Activated CD8-positive, alpha-beta T cell treated with anti-CD3 and anti-CD28 coated beads, Interleukin-2, amount 10 ng/mL, durations not matched to agents 7 days and 5 days (primary cell): ENCODE measurements at regions of chr19 and their contacts with region 1.

Region 1: GRCh38 chr19:6218491-6219162 is 61.1 kb downstream of the MLLT1 start:
- DNase-seq: peak; percentile 90
- ATAC-seq: peak; percentile 80
- H3K4me3 Mint-ChIP-seq: no peak overlapping the region
- H3K27ac Mint-ChIP-seq: peak overlapping the region; percentile 67
- H3K4me1 Mint-ChIP-seq: no peaks in the 10 kb centered on the region
- H3K27me3 Mint-ChIP-seq: no peaks in the 10 kb centered on the region

Region 2: DNA sequence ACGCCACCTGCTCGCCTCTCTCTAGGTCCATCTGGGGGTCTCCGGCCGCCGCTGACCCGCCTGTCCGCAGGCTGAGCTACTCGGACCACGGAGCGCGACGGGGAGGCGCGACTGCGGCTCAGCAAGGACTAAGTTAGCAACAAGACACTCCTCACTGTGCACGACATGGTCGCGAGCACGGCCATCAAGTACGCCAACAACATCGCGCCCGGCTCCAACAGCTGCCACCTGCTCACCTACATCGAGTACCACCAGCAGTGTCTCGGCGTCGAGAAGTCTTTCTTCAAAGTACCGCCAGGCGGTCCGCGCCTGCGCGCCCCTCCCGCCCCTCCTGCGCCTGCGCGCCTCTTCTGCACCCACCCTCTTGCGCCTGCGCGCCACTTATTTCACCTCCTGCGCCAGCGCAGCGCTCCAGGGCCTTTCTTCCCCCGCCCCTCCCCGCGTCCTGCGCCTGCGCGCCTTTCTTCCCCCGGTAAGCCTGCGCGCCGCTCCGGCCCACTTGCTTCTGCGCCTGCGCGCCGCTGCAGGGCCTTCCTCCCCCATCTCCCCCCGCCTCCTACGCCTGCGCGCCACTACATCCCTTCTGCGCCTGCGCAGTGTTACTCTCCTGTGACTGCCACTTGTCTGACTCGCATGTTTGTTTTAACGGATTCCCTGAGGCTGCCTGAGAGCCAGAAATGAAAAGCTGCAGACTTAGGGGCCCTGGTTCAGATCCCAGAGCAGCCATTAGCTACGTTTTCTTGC is 19.2 kb before region 1 on chr19:
- CTCF ChIA-PET with region 1: interaction called, 11 read pairs
- POLR2A ChIA-PET with region 1: interaction called, 3 read pairs
- DNase-seq: peak; percentile 100
- ATAC-seq: peak; percentile 95
- H3K4me3 Mint-ChIP-seq: peak overlapping the region; percentile 97
- H3K27ac Mint-ChIP-seq: peak overlapping the region; percentile 91
- H3K4me1 Mint-ChIP-seq: peaks cover 17% of the 10 kb centered on the region
- H3K27me3 Mint-ChIP-seq: no peaks in the 10 kb centered on the region

Region 3: GRCh38 chr19:6297202-6297601 is 78.6 kb after region 1 on chr19:
- CTCF ChIA-PET with region 1: interaction called, 17 read pairs
- POLR2A ChIA-PET with region 1: no interaction called
- DNase-seq: no peak
- ATAC-seq: no peak
- H3K4me3 Mint-ChIP-seq: no peak overlapping the region
- H3K27ac Mint-ChIP-seq: no peak overlapping the region
- H3K4me1 Mint-ChIP-seq: peaks cover 2% of the 10 kb centered on the region
- H3K27me3 Mint-ChIP-seq: no peaks in the 10 kb centered on the region

Region 4: GRCh38 chr19:6312018-6312417 is 93.4 kb after region 1 on chr19:
- CTCF ChIA-PET with region 1: no interaction called
- POLR2A ChIA-PET with region 1: no interaction called
- DNase-seq: no peak
- ATAC-seq: no peak
- H3K4me3 Mint-ChIP-seq: no peak overlapping the region
- H3K27ac Mint-ChIP-seq: no peak overlapping the region
- H3K4me1 Mint-ChIP-seq: peaks cover 3% of the 10 kb centered on the region
- H3K27me3 Mint-ChIP-seq: no peaks in the 10 kb centered on the region